ENCODE measurements at regions of chr7 and their contacts with region 1.

Region 1: DNA sequence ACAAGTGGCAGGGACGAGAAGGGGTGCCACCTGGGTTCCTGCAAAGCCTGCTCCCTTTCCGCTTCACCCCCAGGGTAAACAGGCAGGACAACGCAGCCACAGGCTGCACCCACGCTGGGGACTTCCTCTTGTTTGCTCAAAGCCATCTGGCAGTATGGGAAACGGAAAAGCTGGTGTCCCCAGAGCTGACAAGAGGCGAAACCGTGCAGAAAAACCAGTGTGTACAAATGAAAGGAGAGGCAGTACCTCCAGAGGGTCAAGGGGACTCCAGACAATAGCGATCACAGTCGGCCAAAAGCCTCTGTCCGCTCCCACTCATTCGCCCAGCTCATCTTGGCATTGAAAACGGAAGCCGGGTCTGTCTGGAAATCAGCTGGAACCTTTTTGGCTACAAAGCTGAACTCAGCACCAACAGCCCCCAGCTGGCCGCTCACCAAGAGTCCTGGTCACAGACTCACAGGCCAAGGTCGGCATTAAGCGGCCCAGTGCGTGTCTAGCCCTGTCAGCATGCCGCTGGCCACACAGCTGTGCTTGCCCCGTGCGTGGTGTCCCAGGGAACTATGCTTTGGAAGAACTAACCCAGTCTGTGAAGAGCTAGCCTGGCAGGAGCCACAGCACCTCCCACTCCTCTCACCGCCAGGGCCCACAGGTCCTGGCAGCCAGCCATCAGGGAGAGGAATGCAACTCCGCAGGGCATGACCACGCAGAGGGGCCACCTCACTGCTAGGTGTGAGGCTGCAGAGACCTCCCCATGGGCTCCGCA is 10.4 kb downstream of the TNS3 start:
- DNase-seq: peak; percentile 78 to 92 (median 88)
- H3K4me3 ChIP-seq: peak overlapping the region in 2 of 3 donors; percentile 21 to 33
- H3K27ac ChIP-seq: peak overlapping the region; percentile 90 to 93
- H3K4me1 ChIP-seq: peaks cover 16 to 75% (median 67%) of the 10 kb centered on the region in 3 donors
- H3K27me3 ChIP-seq: no peaks in the 10 kb centered on the region
- CTCF ChIP-seq: no peak

Region 2: GRCh38 chr7:47432671-47433563 is 138.6 kb before region 1 on chr7:
- intact Hi-C with region 1: no loop called
- DNase-seq: no peak
- H3K4me3 ChIP-seq: no peak overlapping the region
- H3K27ac ChIP-seq: peak overlapping the region; percentile 5 to 33
- H3K4me1 ChIP-seq: peaks cover 0 to 13% (median 13%) of the 10 kb centered on the region in 3 donors
- H3K27me3 ChIP-seq: no peaks in the 10 kb centered on the region
- CTCF ChIP-seq: no peak

Region 3: DNA sequence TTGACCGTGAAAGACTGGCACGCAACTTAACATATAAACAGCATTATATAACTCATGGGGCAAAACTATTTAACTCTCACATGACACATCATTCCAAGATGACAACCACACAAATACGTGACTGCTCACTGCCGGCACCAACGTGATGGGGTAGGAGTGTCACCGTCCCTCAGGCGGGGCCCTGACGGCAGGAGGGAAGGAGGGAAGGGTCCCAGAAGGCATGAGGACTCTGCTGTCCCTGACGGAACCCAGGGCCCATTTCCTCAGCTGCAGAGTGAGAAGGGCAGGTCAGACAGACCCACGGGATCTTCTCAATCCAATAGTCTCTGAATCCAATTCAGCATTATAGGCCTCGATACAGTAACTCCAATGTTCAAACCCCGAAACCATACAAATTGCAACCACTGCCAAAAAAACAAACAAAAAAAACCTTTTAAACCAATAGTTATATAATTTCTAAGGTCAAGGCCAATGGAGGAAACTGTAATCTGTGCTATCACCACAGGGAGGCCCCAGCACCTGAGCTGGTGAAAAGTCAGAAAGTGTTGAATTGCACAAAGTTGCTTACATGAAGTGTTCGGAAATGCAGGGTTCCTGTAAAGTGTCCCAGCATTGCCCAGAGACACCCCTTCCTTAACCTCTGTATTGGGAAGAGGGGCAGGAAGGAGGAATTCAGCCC is 127.0 kb before region 1 on chr7:
- intact Hi-C with region 1: loop called (anchors 10 kb)
- DNase-seq: peak in 1 of 5 donors; percentile 53
- H3K4me3 ChIP-seq: no peak overlapping the region
- H3K27ac ChIP-seq: peak overlapping the region; percentile 60 to 76
- H3K4me1 ChIP-seq: peaks cover 0 to 49% (median 45%) of the 10 kb centered on the region in 3 donors
- H3K27me3 ChIP-seq: no peaks in the 10 kb centered on the region
- CTCF ChIP-seq: peak; percentile 59